Activated naive CD8-positive, alpha-beta T cell treated with anti-CD3 and anti-CD28 coated beads, Interleukin-2, amount 10 ng/mL, durations not matched to agents 7 days and 5 days (primary cell): ENCODE measurements at regions of chr11 and their contacts with region 1.

Region 1: DNA sequence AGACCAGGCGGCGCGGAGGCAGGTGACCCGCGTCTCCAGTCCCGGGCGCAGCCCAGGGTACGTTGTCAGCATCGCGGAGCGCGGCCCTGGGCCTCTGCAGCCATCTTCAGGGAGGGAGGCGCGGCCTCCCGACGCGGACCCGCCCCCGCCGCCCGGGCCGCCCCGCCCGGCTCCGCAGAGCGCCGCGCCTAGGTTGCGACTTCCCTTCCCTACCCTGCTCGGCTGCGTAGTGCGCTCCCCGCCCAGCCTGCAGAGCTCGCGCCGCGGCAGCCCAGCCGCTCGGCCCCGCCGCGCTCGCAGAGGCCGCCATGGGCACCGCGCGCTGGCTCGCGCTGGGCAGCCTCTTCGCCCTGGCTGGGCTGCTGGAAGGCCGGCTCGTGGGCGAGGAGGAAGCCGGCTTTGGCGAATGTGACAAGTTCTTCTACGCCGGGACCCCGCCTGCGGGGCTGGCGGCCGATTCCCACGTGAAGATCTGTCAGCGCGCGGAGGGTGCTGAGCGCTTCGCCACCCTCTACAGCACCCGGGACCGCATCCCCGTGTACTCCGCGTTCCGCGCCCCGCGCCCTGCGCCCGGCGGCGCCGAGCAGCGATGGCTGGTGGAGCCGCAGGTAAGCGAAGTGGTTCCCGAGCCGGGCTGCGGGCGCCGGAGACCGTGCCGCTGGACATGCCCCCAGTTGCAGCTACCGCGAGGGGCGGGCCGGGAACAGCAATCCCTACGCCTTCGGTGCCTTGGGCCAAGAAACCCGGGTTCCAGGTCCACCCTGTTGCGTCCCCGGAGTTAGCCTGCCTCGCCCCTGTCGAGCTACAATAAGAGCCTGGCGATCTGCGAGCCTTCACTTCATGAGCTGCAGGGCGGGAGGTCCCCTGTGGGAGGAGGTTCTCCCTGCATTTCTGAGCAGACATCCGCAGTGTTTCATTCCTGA is at the start of gene ENDOD1:
- DNase-seq: peak; percentile 92
- ATAC-seq: peak; percentile 95
- H3K4me3 Mint-ChIP-seq: peak within 1 kb of the TSS; percentile 93
- H3K27ac Mint-ChIP-seq: peak within 1 kb of the TSS; percentile 98
- H3K4me1 Mint-ChIP-seq: peaks cover 54% of the 10 kb centered on the region
- H3K27me3 Mint-ChIP-seq: no peaks in the 10 kb centered on the region
- total RNA-seq, gene ENDOD1: 23.8 TPM

Region 2: DNA sequence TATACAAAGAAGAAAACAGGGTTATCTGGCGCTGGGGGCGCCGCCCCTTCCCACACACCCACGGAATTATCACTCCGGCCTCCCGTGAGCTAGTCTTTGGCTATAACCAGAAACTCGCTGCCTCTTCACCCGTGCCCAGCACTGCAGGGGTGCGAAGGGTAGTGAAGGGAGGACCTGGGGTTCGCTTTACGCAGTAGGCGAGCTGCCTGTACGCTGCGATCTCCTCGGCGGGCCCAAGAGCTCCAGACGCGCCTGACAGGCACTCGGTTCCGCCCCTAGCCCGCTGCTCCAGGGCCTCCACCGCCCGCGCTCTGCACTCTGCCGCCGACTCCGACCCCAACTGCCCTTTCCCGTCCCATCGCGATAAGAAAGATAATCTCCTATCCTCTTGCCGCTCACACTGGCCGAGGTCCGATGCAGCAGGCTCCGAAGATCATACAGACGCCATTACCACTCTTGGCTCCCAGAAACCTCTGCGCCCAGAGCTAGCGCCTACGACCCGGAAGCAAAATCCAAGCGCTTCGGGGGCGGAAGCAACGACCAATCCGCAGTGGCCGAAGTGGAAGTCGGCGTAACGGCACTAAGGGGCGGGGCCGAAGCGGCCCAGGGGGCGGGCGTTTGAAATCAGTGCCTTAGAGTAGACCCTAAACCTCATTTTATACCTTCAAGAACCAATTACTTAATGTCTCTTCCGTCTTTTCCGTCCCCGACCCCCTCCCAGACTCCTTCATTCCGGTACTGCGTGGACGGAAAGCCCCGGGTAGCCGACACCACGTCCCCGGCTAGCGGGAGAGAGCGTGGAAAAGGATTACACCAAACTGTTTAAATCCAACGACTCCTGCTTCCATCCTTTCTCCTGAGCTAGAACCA is 116.5 kb before region 1 on chr11 and contains the starts of genes CWC15 and KDM4D:
- POLR2A ChIA-PET with region 1: interaction called, 14 read pairs
- DNase-seq: peak; percentile 92
- ATAC-seq: peak; percentile 99
- H3K4me3 Mint-ChIP-seq: peak within 1 kb of the TSS; percentile 100
- H3K27ac Mint-ChIP-seq: peak within 1 kb of the TSS; percentile 100
- H3K4me1 Mint-ChIP-seq: peaks cover 30% of the 10 kb centered on the region
- H3K27me3 Mint-ChIP-seq: no peaks in the 10 kb centered on the region
- total RNA-seq, gene CWC15: 80.7 to 83.0 TPM
- total RNA-seq, gene KDM4D: 1.3 to 1.7 TPM

Region 3: GRCh38 chr11:94988748-94989147 is 101.1 kb before region 1 on chr11:
- POLR2A ChIA-PET with region 1: no interaction called
- DNase-seq: no peak
- ATAC-seq: no peak
- H3K4me3 Mint-ChIP-seq: no peak overlapping the region
- H3K27ac Mint-ChIP-seq: no peak overlapping the region
- H3K4me1 Mint-ChIP-seq: no peaks in the 10 kb centered on the region
- H3K27me3 Mint-ChIP-seq: peaks cover 21% of the 10 kb centered on the region

Region 4: DNA sequence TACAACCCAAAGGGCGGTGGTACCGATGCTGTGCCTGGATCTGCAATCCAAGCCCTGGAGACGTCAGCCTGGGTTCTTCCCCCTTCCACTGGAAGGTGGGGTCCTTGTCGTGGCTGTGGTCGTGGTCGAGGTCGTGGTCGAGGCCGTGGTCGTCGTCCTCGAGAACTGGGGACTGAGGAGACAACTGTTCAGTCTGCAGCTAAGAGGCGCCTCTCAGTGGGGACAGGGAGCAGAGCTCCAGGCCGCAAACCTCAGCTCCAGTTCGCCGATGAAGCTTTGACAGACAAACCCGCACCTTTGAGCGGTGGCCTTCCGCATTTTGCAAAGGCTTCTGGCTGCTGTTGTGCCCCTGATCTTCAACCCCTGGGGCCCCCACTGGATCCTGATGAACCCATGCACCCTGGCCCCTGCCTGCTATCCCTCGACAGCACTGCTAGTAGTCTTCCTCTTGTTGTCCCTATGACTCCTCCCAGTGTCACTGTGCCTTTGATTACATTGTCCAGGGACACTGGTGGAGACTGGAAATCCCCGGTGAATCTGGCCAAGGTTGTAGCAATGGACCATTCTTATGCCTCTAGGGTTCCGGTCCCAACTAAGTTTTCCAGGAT is 39.2 kb before region 1 on chr11:
- POLR2A ChIA-PET with region 1: no interaction called
- DNase-seq: no peak
- ATAC-seq: no peak
- H3K4me3 Mint-ChIP-seq: no peak overlapping the region
- H3K27ac Mint-ChIP-seq: no peak overlapping the region
- H3K4me1 Mint-ChIP-seq: no peaks in the 10 kb centered on the region
- H3K27me3 Mint-ChIP-seq: peaks cover 40% of the 10 kb centered on the region

Region 5: DNA sequence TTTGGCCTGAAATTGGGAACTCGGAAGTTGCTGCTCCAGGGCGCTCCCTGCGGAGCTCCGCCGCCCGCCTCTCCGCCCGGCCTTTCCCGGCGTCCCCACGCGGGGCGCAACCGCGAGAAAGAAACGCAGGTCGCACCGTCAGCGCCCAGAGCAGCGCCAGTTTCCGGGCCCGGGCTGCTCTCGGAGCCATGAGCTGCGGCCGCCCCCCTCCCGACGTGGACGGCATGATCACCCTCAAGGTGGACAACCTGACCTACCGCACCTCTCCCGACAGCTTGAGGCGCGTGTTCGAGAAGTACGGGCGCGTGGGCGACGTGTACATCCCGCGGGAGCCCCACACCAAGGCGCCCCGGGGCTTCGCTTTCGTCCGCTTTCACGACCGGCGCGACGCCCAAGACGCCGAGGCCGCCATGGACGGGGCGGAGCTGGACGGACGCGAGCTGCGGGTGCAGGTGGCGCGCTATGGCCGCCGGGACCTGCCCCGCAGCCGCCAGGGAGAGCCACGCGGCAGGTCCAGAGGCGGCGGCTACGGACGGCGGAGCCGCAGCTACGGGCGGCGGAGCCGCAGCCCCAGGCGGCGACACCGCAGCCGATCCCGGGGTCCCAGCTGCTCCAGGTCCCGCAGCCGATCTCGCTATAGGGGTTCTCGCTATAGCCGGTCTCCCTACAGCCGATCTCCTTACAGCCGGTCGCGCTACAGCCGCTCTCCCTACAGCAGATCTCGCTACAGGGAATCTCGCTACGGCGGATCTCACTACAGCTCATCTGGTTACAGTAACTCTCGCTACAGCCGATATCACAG is 22.6 kb before region 1 on chr11:
- POLR2A ChIA-PET with region 1: interaction called, 152 read pairs
- DNase-seq: peak; percentile 82
- ATAC-seq: peak; percentile 71
- H3K4me3 Mint-ChIP-seq: peak overlapping the region; percentile 88
- H3K27ac Mint-ChIP-seq: peak overlapping the region; percentile 92
- H3K4me1 Mint-ChIP-seq: peaks cover 15% of the 10 kb centered on the region
- H3K27me3 Mint-ChIP-seq: peaks cover 7% of the 10 kb centered on the region

Region 6: GRCh38 chr11:95100191-95100648 is 10.3 kb after region 1 on chr11:
- POLR2A ChIA-PET with region 1: interaction called, 18 read pairs
- DNase-seq: no peak
- ATAC-seq: no peak
- H3K4me3 Mint-ChIP-seq: no peak overlapping the region
- H3K27ac Mint-ChIP-seq: no peak overlapping the region
- H3K4me1 Mint-ChIP-seq: peaks cover 38% of the 10 kb centered on the region
- H3K27me3 Mint-ChIP-seq: no peaks in the 10 kb centered on the region

Region 7: GRCh38 chr11:95138448-95138847 is 48.6 kb after region 1 on chr11:
- POLR2A ChIA-PET with region 1: interaction called, 24 read pairs
- DNase-seq: no peak
- ATAC-seq: peak; percentile 73
- H3K4me3 Mint-ChIP-seq: no peak overlapping the region
- H3K27ac Mint-ChIP-seq: no peak overlapping the region
- H3K4me1 Mint-ChIP-seq: peaks cover 18% of the 10 kb centered on the region
- H3K27me3 Mint-ChIP-seq: peaks cover 9% of the 10 kb centered on the region

Region 8: DNA sequence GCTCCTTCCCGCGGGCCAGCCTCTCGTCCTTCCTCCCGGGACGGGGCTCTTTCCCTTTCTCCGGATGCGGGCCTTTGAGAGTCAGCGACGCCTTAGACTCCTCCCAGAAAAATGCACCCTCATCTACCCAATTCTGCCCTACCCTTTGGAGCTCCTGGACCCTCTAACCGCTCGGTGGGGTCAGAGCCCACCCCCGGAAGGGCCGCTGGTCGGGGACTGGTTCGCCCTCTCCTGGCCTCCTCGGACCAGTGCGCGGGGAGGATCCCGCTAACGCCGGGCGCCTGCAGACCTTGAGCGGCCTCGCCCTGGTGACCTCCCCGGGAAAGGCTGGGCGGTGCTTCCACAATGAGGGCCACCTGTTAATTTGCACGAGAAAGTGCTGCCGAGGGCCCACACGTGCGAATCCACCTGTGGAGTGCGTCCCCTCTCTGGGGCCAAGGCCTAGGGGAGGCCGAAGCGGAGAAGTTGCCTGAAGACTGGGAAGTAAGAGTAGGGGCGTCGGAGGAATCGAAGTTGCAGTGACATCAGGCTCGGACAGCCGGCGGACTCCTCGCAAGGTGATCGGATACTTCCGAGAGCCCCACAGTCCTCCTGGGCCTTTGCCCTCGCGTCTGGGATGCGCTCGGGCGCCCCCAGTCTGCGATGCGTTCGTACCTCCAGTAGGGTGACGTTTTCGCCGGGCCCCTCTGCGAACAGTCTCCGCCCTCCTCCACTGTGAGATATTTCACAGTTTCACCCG is 61.2 kb after region 1 on chr11:
- POLR2A ChIA-PET with region 1: interaction called, 27 read pairs
- DNase-seq: peak; percentile 88
- ATAC-seq: peak; percentile 93
- H3K4me3 Mint-ChIP-seq: peak overlapping the region; percentile 89
- H3K27ac Mint-ChIP-seq: peak overlapping the region; percentile 89
- H3K4me1 Mint-ChIP-seq: peaks cover 34% of the 10 kb centered on the region
- H3K27me3 Mint-ChIP-seq: peaks cover 6% of the 10 kb centered on the region